ENCODE measurements at regions of chr6 and their contacts with region 1.

Region 1: DNA sequence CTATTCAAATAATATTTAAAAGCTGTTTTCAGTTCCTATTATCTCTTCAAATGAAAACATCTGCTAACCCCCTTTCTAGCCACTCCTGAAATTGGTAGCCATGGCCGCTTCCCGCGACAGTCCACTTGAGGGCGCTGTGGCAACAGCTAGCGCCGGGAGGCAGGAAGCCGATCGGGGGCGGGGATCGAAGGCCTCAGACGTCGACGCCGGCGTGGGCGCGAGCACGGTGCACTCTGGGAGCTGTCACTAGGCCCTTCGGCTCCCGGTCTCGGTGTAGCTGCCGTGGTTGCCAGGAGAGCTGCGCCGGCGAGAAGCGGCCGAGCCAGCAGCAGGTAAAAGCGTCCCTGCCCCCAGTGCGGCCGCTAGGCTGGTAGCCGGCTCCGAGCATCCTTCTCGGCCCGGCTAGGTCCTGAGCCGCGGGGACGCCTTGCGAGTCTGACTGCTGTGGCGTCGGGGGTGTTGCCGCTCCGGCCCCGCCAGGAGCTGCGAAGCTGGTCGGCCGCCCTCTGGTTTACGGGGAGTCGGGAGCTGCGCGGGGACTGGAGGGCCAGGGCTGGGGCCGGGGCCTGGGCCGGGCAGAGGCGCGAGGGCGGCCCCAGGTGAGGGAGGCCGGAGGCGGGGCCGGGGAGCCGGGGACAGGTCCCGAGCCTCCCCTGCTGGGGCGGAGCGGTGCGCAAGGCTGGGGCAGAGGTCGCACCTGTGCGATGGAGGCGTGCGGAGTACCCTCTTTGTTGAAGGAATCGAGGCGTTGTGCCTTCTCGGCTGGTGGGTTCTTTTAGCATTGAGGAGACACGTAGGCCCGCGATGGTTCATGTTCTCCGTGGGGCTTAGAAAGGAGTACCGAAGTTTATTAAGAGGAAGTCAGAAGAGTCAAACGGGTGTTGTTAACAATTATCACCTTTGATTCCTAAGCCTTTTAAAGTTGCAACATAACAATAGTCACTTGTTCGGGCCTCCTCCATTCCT is at the start of gene DOP1A:
- DNase-seq: peak; percentile 85
- ATAC-seq: peak; percentile 86
- H3K4me3 ChIP-seq: peak within 1 kb of the TSS; percentile 87
- H3K27ac ChIP-seq: peak within 1 kb of the TSS; percentile 71
- H3K4me1 ChIP-seq: peaks cover 8% of the 10 kb centered on the region
- H3K27me3 ChIP-seq: no peaks in the 10 kb centered on the region
- CTCF ChIP-seq: peak; percentile 93 to 99 (median 96)
- EP300 ChIP-seq: peak; percentile 26 to 44; a peak in 1 of 4 replicates
- POLR2A ChIP-seq: peak; percentile 92
- RAD21 ChIP-seq: peak; percentile 98
- polyA plus RNA-seq, gene DOP1A: 1.9 to 2.9 TPM

Region 2: DNA sequence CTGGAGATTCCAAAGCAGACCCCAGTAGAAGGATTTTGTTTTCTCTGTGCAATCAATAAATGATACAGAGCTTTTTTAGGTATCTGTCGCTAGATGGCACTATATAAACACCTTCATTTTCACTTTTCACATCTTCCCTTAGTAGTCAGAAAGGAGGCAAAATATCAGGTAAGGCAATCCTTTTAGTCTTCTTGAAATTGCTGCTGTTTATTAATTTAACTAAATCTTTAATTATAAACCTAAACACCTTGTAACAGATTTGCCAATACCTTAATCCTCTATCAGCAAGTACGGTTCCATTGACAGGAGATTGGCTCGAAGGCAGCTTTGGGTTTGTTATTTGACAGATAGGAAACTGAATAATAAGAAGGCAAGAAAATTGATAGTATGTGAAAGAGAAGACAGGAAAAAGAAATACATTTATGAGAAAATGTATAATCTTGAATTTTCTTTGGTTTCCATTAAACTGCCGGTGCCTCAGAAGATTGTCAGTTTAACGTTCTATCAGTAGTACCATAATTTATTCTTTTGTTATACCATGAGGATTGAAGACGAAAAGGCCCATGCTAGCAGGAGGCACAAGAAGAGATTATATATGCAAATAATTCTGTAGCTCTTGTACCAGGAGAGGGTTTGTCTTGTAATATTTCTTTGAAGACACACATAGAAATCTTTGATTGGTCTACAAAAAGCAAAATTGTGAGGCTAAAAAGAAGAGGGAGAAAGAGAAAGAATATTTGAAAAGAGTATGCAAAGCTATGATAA is 796.7 kb before region 1 on chr6:
- CTCF ChIA-PET with region 1: interaction called, 45 read pairs
- POLR2A ChIA-PET with region 1: no interaction called
- RAD21 ChIA-PET with region 1: interaction called, 10 read pairs
- SMC1A ChIA-PET with region 1: interaction called, 11 read pairs
- in situ Hi-C with region 1: no loop called
- intact Hi-C with region 1: no loop called
- DNase-seq: peak; percentile 15
- ATAC-seq: peak; percentile 79
- H3K4me3 ChIP-seq: no peak overlapping the region
- H3K27ac ChIP-seq: no peak overlapping the region
- H3K4me1 ChIP-seq: no peaks in the 10 kb centered on the region
- H3K27me3 ChIP-seq: no peaks in the 10 kb centered on the region
- CTCF ChIP-seq: peak; percentile 45 to 65 (median 50)
- EP300 ChIP-seq: no peak
- POLR2A ChIP-seq: no peak
- RAD21 ChIP-seq: peak; percentile 84

Region 3: GRCh38 chr6:83119742-83120300 is 52.1 kb after region 1 on chr6:
- CTCF ChIA-PET with region 1: interaction called, 37 read pairs
- POLR2A ChIA-PET with region 1: interaction called, 3 read pairs
- RAD21 ChIA-PET with region 1: interaction called, 6 read pairs
- SMC1A ChIA-PET with region 1: interaction called, 14 read pairs
- in situ Hi-C with region 1: no loop called
- intact Hi-C with region 1: loop called (anchors 2 kb)
- DNase-seq: no peak
- ATAC-seq: no peak
- H3K4me3 ChIP-seq: no peak overlapping the region
- H3K27ac ChIP-seq: no peak overlapping the region
- H3K4me1 ChIP-seq: no peaks in the 10 kb centered on the region
- H3K27me3 ChIP-seq: no peaks in the 10 kb centered on the region
- CTCF ChIP-seq: no peak
- EP300 ChIP-seq: no peak
- POLR2A ChIP-seq: no peak
- RAD21 ChIP-seq: no peak

Region 4: DNA sequence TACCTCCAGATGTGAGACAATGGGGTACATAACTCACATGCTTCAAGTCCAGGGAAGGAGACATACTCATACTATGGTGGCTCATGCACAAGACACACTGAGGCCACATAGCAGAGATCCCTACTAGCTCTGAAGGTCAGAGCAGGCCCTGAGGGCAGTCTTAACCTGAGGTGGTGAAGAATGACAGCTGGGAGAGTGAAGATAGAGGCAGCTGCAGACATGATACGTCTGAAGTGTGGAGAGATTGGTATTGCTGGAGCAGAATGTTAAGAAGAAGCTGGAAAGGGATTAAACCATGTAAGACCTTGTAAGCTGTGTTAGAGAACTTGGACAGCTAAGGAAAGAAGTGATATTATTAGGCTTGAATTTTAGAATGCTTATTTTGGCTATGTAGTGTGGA is 92.4 kb after region 1 on chr6:
- CTCF ChIA-PET with region 1: interaction called, 16 read pairs
- POLR2A ChIA-PET with region 1: no interaction called
- RAD21 ChIA-PET with region 1: interaction called, 5 read pairs
- SMC1A ChIA-PET with region 1: interaction called, 3 read pairs
- in situ Hi-C with region 1: no loop called
- intact Hi-C with region 1: no loop called
- DNase-seq: no peak
- ATAC-seq: no peak
- H3K4me3 ChIP-seq: no peak overlapping the region
- H3K27ac ChIP-seq: no peak overlapping the region
- H3K4me1 ChIP-seq: no peaks in the 10 kb centered on the region
- H3K27me3 ChIP-seq: no peaks in the 10 kb centered on the region
- CTCF ChIP-seq: no peak
- EP300 ChIP-seq: no peak
- POLR2A ChIP-seq: no peak
- RAD21 ChIP-seq: no peak

Region 5: GRCh38 chr6:83192871-83193746 is 125.4 kb after region 1 on chr6 and contains the starts of genes PGM3 and RWDD2A:
- CTCF ChIA-PET with region 1: interaction called, 195 read pairs
- POLR2A ChIA-PET with region 1: interaction called, 12 read pairs
- RAD21 ChIA-PET with region 1: interaction called, 93 read pairs
- SMC1A ChIA-PET with region 1: interaction called, 108 read pairs
- in situ Hi-C with region 1: no loop called
- intact Hi-C with region 1: loop called (anchors 5 kb)
- DNase-seq: peak; percentile 56
- ATAC-seq: peak; percentile 97
- H3K4me3 ChIP-seq: peak within 1 kb of the TSS; percentile 79
- H3K27ac ChIP-seq: peak within 1 kb of the TSS; percentile 89
- H3K4me1 ChIP-seq: peaks cover 5% of the 10 kb centered on the region
- H3K27me3 ChIP-seq: no peaks in the 10 kb centered on the region
- CTCF ChIP-seq: no peak
- EP300 ChIP-seq: no peak
- POLR2A ChIP-seq: peak; percentile 96
- RAD21 ChIP-seq: no peak
- polyA plus RNA-seq, gene PGM3: 23.1 to 28.6 TPM
- polyA plus RNA-seq, gene RWDD2A: 3.2 to 3.4 TPM

Region 6: GRCh38 chr6:83292900-83293843 is 225.4 kb after region 1 on chr6:
- CTCF ChIA-PET with region 1: interaction called, 8 read pairs
- POLR2A ChIA-PET with region 1: no interaction called
- RAD21 ChIA-PET with region 1: no interaction called
- SMC1A ChIA-PET with region 1: no interaction called
- in situ Hi-C with region 1: no loop called
- intact Hi-C with region 1: loop called (anchors 10 kb)
- DNase-seq: peak; percentile 19
- ATAC-seq: peak; percentile 92
- H3K4me3 ChIP-seq: no peak overlapping the region
- H3K27ac ChIP-seq: no peak overlapping the region
- H3K4me1 ChIP-seq: peaks cover 11% of the 10 kb centered on the region
- H3K27me3 ChIP-seq: no peaks in the 10 kb centered on the region
- CTCF ChIP-seq: no peak
- EP300 ChIP-seq: no peak; a peak in 1 of 4 replicates
- POLR2A ChIP-seq: no peak
- RAD21 ChIP-seq: no peak

Region 7: DNA sequence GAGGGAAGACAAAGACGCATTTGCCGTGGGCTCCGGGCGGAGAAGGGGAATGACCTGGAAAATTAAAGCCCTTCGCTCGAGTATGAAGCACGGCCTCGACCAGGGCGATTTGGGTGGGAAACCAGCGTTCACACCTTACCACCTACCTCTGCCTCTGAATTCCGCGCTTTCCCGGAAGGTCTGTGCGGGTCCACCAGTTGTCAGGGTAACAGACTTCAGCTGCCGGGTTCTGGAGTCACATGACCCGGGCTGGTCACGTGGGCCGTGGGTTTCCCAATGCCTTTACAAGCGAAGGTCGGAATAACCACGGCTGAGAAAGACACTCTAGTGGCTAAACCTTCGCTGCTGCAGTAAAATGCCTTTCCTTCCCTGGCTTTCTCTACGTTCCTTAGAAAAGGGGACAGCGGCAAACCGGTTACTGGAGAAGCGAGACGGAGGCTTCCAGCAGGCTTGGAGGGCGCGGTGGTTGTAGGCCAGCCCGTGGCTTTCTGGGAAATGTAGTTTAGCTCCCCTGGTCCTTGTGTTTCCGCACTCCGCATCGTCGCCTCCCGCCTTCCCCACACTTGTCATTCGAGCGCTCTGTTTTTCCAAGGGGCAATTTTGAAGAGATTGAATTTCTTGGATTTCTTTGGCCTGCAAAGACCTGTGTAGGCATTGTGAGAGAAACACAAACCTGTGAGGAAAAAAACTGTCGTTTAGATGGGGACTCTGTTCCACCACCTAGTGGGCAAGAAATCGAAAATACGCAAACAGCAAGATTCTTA is 1159.9 kb after region 1 on chr6 and contains the start of gene CEP162:
- CTCF ChIA-PET with region 1: interaction called, 10 read pairs
- POLR2A ChIA-PET with region 1: no interaction called
- RAD21 ChIA-PET with region 1: no interaction called
- SMC1A ChIA-PET with region 1: no interaction called
- in situ Hi-C with region 1: no loop called
- intact Hi-C with region 1: no loop called
- DNase-seq: peak; percentile 79
- ATAC-seq: peak; percentile 98
- H3K4me3 ChIP-seq: peak within 1 kb of the TSS; percentile 95
- H3K27ac ChIP-seq: peak within 1 kb of the TSS; percentile 51
- H3K4me1 ChIP-seq: no peaks in the 10 kb centered on the region
- H3K27me3 ChIP-seq: no peaks in the 10 kb centered on the region
- CTCF ChIP-seq: peak; percentile 59 to 69 (median 60)
- EP300 ChIP-seq: no peak
- POLR2A ChIP-seq: peak; percentile 52
- RAD21 ChIP-seq: peak; percentile 28
- polyA plus RNA-seq, gene CEP162: 2.7 to 2.8 TPM

Measured in GM12878 (cell line).